Activated B cell treated with CpG ODN at 0.5 μM for 24 hours (primary cell): ENCODE measurements at regions of chr2 and their contacts with region 1.

Region 1: DNA sequence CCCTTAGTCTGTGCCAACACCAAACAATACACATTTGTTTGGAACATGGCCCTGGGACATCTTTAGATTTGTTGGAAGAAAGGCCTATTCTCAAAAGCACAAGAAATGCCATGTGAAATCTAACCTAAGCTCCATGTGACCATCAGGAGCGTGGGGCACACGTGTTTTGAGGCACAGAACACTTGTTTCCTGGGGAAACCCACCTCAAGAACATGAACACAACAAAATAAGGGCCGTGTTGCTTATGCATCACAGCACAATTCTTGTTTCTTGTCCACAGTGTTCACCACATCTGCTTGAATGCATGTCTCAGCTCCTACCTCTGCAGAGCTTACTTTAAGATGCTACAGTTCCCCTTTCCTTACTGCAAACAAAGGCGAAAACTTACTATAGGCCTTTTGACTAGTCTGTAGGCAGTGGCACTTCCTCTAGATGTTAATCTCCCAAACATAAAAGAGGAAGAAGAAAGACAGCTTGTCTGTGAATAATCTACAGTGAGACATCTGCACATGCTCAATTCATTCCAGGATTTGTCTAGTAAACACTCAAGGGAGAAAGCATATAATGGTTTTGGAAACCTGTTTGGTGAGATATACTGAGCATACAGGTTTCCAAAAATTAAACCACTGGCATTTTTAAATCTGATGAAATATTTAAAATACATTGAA is 165.0 kb downstream of the ANKRD44 start:
- DNase-seq: no peak
- ATAC-seq: peak; percentile 91
- H3K4me3 Mint-ChIP-seq: peak overlapping the region; percentile 67
- H3K27ac Mint-ChIP-seq: peak overlapping the region; percentile 97
- H3K4me1 Mint-ChIP-seq: peaks cover 91% of the 10 kb centered on the region
- H3K27me3 Mint-ChIP-seq: no peaks in the 10 kb centered on the region
- CTCF ChIP-seq: no peak

Region 2: DNA sequence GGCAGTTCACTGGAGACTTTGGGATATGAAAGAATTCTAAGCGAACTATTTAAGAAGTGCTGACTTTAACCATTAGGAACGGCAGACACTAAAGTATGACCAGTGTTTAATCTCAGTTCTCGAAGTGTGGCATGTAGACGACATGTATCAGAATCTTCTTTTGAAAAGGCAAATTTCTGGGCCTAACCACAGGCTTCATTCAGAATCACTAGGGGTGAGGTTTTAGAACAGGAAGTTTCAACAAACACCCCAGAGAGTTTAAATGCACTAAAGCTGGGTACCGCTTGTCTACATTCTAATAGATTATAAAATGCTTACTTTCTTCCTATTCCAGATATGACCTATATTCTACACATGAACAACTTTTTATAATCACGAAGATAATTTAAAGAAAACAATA is 15.3 kb before region 1 on chr2:
- CTCF ChIA-PET with region 1: interaction called, 6 read pairs
- POLR2A ChIA-PET with region 1: interaction called, 48 read pairs
- intact Hi-C with region 1: loop called (anchors 1 kb)
- DNase-seq: no peak
- ATAC-seq: peak; percentile 69
- H3K4me3 Mint-ChIP-seq: peak overlapping the region; percentile 82
- H3K27ac Mint-ChIP-seq: peak overlapping the region; percentile 98
- H3K4me1 Mint-ChIP-seq: peaks cover 71% of the 10 kb centered on the region
- H3K27me3 Mint-ChIP-seq: no peaks in the 10 kb centered on the region
- CTCF ChIP-seq: no peak

Region 3: GRCh38 chr2:197159661-197160211 is 14.1 kb after region 1 on chr2:
- CTCF ChIA-PET with region 1: no interaction called
- POLR2A ChIA-PET with region 1: interaction called, 13 read pairs
- intact Hi-C with region 1: loop called (anchors 2 kb)
- DNase-seq: no peak
- ATAC-seq: peak; percentile 53
- H3K4me3 Mint-ChIP-seq: peak overlapping the region; percentile 64
- H3K27ac Mint-ChIP-seq: peak overlapping the region; percentile 90
- H3K4me1 Mint-ChIP-seq: peaks cover 93% of the 10 kb centered on the region
- H3K27me3 Mint-ChIP-seq: no peaks in the 10 kb centered on the region
- CTCF ChIP-seq: no peak

Region 4: DNA sequence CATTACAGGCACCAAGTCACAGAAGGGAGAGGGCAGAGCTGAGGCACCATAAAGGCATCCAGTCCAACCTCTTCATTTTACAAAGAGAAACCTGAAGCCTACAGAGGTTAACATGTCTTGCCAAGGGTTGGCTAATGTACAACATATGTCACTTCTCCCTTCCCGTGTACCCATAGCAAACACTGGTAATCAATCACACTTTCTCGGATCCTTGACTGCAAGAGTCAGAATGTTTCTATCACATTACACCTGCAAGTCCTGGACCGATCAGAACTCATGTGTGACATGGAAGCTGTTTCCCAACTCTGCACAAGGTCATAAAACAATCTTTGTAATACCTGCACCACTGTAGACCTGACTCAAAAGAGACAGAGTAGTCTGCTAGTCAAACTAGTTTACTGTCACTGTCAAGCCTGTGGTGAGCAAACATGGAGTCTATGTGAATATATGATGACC is 159.0 kb after region 1 on chr2:
- CTCF ChIA-PET with region 1: interaction called, 3 read pairs
- POLR2A ChIA-PET with region 1: interaction called, 22 read pairs
- intact Hi-C with region 1: no loop called
- DNase-seq: no peak
- ATAC-seq: peak; percentile 5
- H3K4me3 Mint-ChIP-seq: peak overlapping the region; percentile 74
- H3K27ac Mint-ChIP-seq: peak overlapping the region; percentile 95
- H3K4me1 Mint-ChIP-seq: peaks cover 93% of the 10 kb centered on the region
- H3K27me3 Mint-ChIP-seq: no peaks in the 10 kb centered on the region
- CTCF ChIP-seq: no peak